Activated CD8-positive, alpha-beta memory T cell treated with anti-CD3 and anti-CD28 coated beads, Interleukin-2, amount 10 ng/mL, durations not matched to agents 7 days and 5 days (primary cell): ENCODE measurements at regions of chr6 and their contacts with region 1.

Region 1: DNA sequence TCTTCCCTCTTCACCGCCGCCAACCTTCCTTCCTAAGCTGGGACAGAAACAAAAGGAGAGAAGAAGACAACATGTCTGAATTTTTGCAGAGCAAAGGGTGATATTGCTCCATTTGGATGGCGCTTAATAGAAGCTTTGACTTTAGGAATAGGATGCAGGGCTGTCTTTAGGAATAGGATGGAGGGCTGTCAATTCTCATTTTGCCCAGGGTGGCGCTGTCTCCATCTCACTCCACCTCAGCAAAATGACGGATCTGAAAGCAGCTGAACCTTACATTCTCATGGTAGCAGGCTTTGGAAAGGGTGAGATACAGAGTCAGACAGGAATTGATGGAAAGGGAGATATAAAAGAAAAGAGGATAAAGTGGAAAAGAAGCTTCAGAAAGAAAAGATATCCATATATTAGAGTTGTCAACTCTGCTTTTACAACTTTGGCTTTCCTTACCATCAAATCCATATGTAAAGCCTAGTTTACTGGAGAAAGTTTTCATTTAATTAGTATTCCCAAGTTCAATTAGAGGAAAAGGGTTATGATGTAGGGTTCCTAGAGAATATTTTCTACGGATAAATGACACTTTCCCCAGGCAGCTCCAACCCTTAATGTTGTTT is 2.4 kb downstream of the MTCL3 start:
- DNase-seq: peak; percentile 76
- ATAC-seq: peak; percentile 56
- H3K4me3 Mint-ChIP-seq: peak overlapping the region; percentile 90
- H3K27ac Mint-ChIP-seq: peak overlapping the region; percentile 77
- H3K4me1 Mint-ChIP-seq: peaks cover 46% of the 10 kb centered on the region
- H3K27me3 Mint-ChIP-seq: peaks cover 23% of the 10 kb centered on the region

Region 2: DNA sequence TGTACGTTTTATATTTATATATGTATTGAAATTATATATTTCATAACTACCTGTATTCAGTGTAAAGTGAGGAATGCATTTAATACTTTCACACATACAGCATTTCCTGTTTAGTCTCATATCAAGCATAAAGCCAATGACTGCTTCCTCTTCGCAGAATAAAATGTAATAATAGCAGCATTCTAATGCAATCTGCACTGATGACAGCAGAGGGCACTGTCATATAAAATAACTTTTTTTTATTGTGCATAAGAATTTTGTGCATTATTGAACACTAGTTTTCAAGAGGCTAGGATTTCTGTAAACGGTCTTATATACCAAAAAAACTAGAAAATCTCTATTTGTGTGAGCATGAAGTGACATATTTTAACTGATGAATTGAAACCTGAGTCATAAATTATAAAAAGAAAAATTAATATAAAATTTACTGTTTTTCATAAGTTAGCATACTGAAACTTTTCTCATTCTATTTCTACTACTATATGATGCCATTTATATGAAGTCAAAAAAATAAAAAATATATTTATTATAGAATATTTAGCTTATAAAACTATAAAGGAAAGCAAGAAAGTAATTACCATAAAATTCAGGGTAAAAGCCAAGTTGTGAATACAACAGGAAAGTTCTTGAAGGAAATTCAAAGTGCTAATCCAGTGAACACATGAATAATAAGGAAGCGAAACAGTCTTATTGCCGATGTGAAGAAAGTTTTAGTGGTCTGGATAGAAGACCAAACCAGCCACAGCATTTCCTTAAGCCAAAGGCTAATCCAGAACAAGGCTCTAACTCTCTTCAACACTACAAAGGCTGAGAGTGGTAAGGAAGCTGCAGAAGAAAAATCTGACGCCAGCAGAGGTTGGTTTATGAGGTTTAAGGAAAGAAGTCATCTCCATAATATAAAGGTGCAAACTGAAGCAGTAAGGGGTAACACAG is 213.8 kb before region 1 on chr6:
- CTCF ChIA-PET with region 1: interaction called, 10 read pairs
- DNase-seq: peak; percentile 58
- ATAC-seq: peak; percentile 60
- H3K4me3 Mint-ChIP-seq: no peak overlapping the region
- H3K27ac Mint-ChIP-seq: no peak overlapping the region
- H3K4me1 Mint-ChIP-seq: peaks cover 11% of the 10 kb centered on the region
- H3K27me3 Mint-ChIP-seq: no peaks in the 10 kb centered on the region

Region 3: DNA sequence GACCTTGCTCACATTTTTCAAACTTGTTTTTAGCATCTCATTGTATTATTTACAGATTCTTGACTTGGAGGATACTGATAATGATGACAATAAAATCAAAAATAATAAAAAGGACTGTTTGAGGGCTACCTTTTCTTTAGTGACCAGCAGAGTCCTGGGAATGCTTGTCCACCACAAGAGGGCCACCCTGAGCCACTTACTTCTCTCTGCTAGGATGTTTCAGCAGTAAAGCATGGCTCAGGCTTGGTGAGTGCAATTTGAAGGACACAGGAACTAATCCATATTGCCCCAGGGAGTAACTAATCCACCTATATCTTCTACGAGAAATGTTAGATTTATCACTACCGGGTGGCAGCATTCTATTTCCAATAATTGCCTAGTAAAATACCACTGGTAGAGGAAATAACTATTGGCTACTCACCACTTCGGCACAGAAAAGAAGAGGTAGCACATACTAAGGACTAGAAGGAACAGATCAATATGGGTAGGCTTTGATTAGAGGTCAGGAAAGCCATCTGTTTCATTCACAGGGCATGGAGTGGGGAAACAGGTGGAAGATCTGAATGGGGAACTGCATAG is 51.8 kb before region 1 on chr6:
- CTCF ChIA-PET with region 1: interaction called, 30 read pairs
- DNase-seq: peak; percentile 79
- ATAC-seq: peak; percentile 84
- H3K4me3 Mint-ChIP-seq: no peak overlapping the region
- H3K27ac Mint-ChIP-seq: no peak overlapping the region
- H3K4me1 Mint-ChIP-seq: peaks cover 15% of the 10 kb centered on the region
- H3K27me3 Mint-ChIP-seq: no peaks in the 10 kb centered on the region

Region 4: GRCh38 chr6:127471379-127472255 is 45.2 kb before region 1 on chr6:
- CTCF ChIA-PET with region 1: interaction called, 30 read pairs
- DNase-seq: no peak
- ATAC-seq: no peak
- H3K4me3 Mint-ChIP-seq: no peak overlapping the region
- H3K27ac Mint-ChIP-seq: no peak overlapping the region
- H3K4me1 Mint-ChIP-seq: no peaks in the 10 kb centered on the region
- H3K27me3 Mint-ChIP-seq: no peaks in the 10 kb centered on the region

Region 5: DNA sequence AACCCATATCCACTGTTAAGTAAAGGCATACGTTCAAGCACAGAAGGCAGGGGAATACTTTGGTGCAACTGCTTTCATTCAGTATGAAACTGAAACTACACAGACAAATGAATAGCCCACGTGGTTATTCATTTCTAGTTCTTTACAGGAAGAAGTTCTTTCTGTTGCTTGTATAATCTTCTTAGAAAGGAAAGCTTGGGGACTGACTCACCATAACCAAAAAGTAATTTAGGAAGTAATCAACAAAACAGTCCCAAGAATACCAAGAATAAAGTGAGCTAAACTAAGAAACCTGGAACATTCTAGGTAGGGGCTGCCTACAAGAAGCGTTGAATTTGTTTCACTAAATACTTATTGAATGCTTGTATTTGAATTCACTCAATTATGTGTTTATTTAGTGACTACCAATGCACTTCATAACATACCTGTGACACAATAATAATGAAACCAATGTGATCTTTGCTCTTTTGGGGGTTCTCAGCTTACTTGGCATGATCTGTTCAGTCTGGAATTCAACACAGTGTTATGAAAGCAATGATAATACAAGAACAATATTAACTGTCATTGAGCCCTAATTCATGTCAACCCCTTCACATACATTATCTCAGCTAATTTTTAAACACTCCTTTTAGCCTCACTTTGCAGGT is 32.4 kb before region 1 on chr6:
- CTCF ChIA-PET with region 1: interaction called, 257 read pairs
- DNase-seq: no peak
- ATAC-seq: peak; percentile 96
- H3K4me3 Mint-ChIP-seq: peak overlapping the region; percentile 61
- H3K27ac Mint-ChIP-seq: peak overlapping the region; percentile 88
- H3K4me1 Mint-ChIP-seq: peaks cover 36% of the 10 kb centered on the region
- H3K27me3 Mint-ChIP-seq: no peaks in the 10 kb centered on the region

Region 6: GRCh38 chr6:127533011-127533410 is 16.2 kb after region 1 on chr6:
- CTCF ChIA-PET with region 1: interaction called, 57 read pairs
- DNase-seq: no peak
- ATAC-seq: no peak
- H3K4me3 Mint-ChIP-seq: no peak overlapping the region
- H3K27ac Mint-ChIP-seq: no peak overlapping the region
- H3K4me1 Mint-ChIP-seq: no peaks in the 10 kb centered on the region
- H3K27me3 Mint-ChIP-seq: peaks cover 46% of the 10 kb centered on the region

Region 7: DNA sequence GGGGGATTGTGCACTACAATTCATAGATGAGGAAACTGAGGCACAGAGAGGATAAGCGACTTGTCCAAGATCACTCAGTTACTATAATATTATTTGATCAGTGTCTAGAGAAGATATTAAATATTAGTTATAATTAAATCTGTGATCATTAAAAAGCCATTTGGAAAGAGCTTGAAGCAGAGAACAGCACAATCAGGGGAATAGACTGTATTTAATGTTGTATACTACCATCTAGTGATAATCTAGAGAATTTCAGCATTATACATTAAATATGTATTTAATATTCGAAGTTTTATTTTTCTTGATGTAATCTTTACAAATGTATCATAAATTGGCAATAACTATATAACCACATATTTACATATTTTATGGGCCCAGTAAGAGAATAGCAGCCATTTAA is 22.5 kb after region 1 on chr6:
- CTCF ChIA-PET with region 1: interaction called, 57 read pairs
- DNase-seq: no peak
- ATAC-seq: no peak
- H3K4me3 Mint-ChIP-seq: no peak overlapping the region
- H3K27ac Mint-ChIP-seq: no peak overlapping the region
- H3K4me1 Mint-ChIP-seq: peaks cover 13% of the 10 kb centered on the region
- H3K27me3 Mint-ChIP-seq: peaks cover 27% of the 10 kb centered on the region